GM12878 (cell line): ENCODE measurements at regions of chr18 and their contacts with region 1.

Region 1: GRCh38 chr18:23422672-23423418 is 30.2 kb upstream of the RIOK3 start:
- DNase-seq: peak; percentile 92
- ATAC-seq: peak; percentile 96
- H3K4me3 ChIP-seq: peak overlapping the region; percentile 55; the same call in 1 of the 2 replicates
- H3K27ac ChIP-seq: peak overlapping the region; percentile 62
- H3K4me1 ChIP-seq: peaks cover 24% of the 10 kb centered on the region
- H3K27me3 ChIP-seq: no peaks in the 10 kb centered on the region
- CTCF ChIP-seq: peak in 2 of 3 experiments; percentile 26 to 27; a peak in 2 of 6 replicates
- EP300 ChIP-seq: peak; percentile 85 to 95
- POLR2A ChIP-seq: no peak
- RAD21 ChIP-seq: 0 out of 2 replicates have a peak, but pooled peaks have one; percentile 24

Region 2: DNA sequence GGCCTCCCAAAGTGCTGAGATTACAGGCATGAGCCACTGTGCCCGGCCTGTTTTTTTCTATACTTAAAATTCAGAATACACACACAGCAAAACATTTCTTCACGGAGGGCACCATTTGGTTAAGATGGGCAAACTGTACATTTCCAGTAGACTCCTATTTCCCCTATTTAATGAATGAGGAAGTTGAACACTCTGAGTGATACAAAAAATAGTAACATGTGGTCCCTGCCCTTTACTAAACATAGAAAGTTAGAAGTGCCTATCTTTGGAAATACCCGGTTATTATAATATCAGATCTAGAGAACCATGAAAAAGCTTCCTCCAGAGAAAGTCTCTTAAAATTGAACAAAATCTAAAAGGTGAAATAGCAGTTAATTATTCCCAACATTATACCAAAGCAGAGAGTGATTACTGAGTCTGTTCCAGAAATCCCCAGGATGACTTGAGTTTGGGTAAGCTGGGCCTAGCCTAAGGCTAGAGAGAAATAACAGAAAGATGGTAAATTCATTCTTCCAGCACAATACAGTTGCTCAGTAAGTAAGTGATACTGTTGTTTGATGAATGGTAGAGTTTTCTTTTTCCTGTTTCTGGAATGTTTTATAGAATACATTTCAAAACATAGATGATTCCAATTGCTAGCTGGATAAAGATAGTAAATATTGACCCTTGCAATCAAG is 57.1 kb after region 1 on chr18:
- CTCF ChIA-PET with region 1: interaction called, 4 read pairs
- POLR2A ChIA-PET with region 1: interaction called, 6 read pairs
- RAD21 ChIA-PET with region 1: interaction called, 7 read pairs
- SMC1A ChIA-PET with region 1: interaction called, 10 read pairs
- in situ Hi-C with region 1: no loop called
- intact Hi-C with region 1: no loop called
- DNase-seq: no peak
- ATAC-seq: peak; percentile 90
- H3K4me3 ChIP-seq: peak overlapping the region; percentile 29; the same call in 1 of the 2 replicates
- H3K27ac ChIP-seq: peak overlapping the region; percentile 73
- H3K4me1 ChIP-seq: peaks cover 19% of the 10 kb centered on the region
- H3K27me3 ChIP-seq: no peaks in the 10 kb centered on the region
- CTCF ChIP-seq: no peak
- EP300 ChIP-seq: no peak
- POLR2A ChIP-seq: no peak
- RAD21 ChIP-seq: no peak

Region 3: GRCh38 chr18:23487738-23488570 is 65.1 kb after region 1 on chr18:
- CTCF ChIA-PET with region 1: interaction called, 7 read pairs
- POLR2A ChIA-PET with region 1: interaction called, 3 read pairs
- RAD21 ChIA-PET with region 1: interaction called, 7 read pairs
- SMC1A ChIA-PET with region 1: interaction called, 10 read pairs
- in situ Hi-C with region 1: no loop called
- intact Hi-C with region 1: no loop called
- DNase-seq: peak; percentile 62
- ATAC-seq: peak; percentile 92
- H3K4me3 ChIP-seq: peak overlapping the region; percentile 70
- H3K27ac ChIP-seq: peak overlapping the region; percentile 93
- H3K4me1 ChIP-seq: peaks cover 10% of the 10 kb centered on the region
- H3K27me3 ChIP-seq: no peaks in the 10 kb centered on the region
- CTCF ChIP-seq: no peak
- EP300 ChIP-seq: no peak
- POLR2A ChIP-seq: peak; percentile 43
- RAD21 ChIP-seq: no peak